IMR-90 (cell line): ENCODE measurements at regions of chr2 and their contacts with region 1.

Region 1: GRCh38 chr2:12769492-12770105 is 52.9 kb downstream of the TRIB2 start:
- DNase-seq: peak; percentile 24
- ATAC-seq: no peak
- H3K4me3 ChIP-seq: no peak overlapping the region
- H3K27ac ChIP-seq: no peak overlapping the region
- H3K4me1 ChIP-seq: peaks cover 12% of the 10 kb centered on the region
- H3K27me3 ChIP-seq: no peaks in the 10 kb centered on the region
- CTCF ChIP-seq: no peak
- POLR2A ChIP-seq: no peak
- RAD21 ChIP-seq: no peak

Region 2: GRCh38 chr2:12469141-12469561 is 300.4 kb before region 1 on chr2:
- CTCF ChIA-PET with region 1: no interaction called
- POLR2A ChIA-PET with region 1: no interaction called
- dilution Hi-C with region 1: no loop called
- in situ Hi-C with region 1: no loop called
- intact Hi-C with region 1: no loop called
- DNase-seq: peak; percentile 52
- ATAC-seq: peak; percentile 93
- H3K4me3 ChIP-seq: no peak overlapping the region
- H3K27ac ChIP-seq: peak overlapping the region; percentile 1; the same call in 1 of the 2 replicates
- H3K4me1 ChIP-seq: peaks cover 9% of the 10 kb centered on the region
- H3K27me3 ChIP-seq: no peaks in the 10 kb centered on the region
- CTCF ChIP-seq: no peak
- POLR2A ChIP-seq: no peak
- RAD21 ChIP-seq: no peak

Region 3: DNA sequence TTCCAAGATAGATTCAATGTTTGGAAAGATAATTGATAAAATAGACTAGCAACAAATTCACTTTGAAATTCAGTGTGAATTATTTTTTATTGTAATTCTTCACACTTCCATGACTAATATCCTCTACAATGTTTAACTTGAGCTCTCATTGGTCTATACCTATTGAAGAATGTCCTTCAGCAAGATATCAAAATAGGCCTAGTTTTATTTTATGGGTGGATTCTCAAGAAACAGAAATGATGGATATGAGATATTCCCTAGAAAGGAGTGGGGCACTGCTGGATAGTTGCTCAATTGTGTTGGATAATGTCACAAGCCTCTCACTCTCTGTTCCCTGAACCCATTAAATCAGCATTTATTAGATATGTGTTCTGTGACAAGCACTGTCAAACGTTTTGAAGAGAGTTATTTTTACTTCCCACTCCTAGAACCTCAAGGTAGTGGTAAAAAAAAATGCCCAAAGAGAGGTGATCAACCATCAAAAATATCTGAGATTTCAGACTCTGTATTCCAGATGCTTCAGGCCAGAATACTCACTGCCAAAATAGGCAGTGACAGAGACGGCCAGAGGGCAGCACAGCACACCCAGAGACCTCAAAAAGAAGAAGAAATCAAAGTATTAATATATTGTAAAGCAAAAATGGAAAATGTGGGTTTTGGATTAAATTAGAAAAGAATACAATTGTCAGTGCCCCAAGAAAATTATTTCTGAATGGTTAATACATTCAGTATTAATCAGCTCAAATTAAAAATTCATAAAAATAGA is 34.7 kb after region 1 on chr2:
- CTCF ChIA-PET with region 1: no interaction called
- POLR2A ChIA-PET with region 1: no interaction called
- dilution Hi-C with region 1: no loop called
- in situ Hi-C with region 1: no loop called
- intact Hi-C with region 1: loop called (anchors 5 kb)
- DNase-seq: no peak
- ATAC-seq: no peak; the same call in 1 of the 2 replicates
- H3K4me3 ChIP-seq: no peak overlapping the region
- H3K27ac ChIP-seq: no peak overlapping the region
- H3K4me1 ChIP-seq: no peaks in the 10 kb centered on the region
- H3K27me3 ChIP-seq: no peaks in the 10 kb centered on the region
- CTCF ChIP-seq: no peak
- POLR2A ChIP-seq: no peak
- RAD21 ChIP-seq: no peak

Region 4: DNA sequence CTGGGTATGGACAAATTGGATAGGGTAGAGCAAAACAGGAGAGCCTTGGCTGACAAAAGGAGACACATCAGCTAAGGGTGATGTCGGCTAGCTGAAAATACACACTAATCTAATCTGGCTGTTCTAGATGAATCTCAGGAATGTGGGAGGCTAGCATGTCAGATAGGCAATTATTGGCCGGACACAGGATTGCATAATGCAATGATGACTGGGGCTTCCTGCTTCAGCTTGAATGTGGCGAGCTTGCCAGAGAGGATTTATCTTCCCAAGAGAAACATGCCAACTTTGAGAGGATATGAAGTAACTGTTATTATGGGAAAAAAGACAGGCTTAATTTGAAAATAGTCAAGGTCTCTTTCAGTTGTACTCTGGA is 49.5 kb after region 1 on chr2:
- CTCF ChIA-PET with region 1: no interaction called
- POLR2A ChIA-PET with region 1: no interaction called
- dilution Hi-C with region 1: no loop called
- in situ Hi-C with region 1: no loop called
- intact Hi-C with region 1: loop called (anchors 2 kb)
- DNase-seq: peak; percentile 99
- ATAC-seq: peak; percentile 89
- H3K4me3 ChIP-seq: no peak overlapping the region
- H3K27ac ChIP-seq: peak overlapping the region; percentile 65
- H3K4me1 ChIP-seq: peaks cover 13% of the 10 kb centered on the region
- H3K27me3 ChIP-seq: no peaks in the 10 kb centered on the region
- CTCF ChIP-seq: no peak
- POLR2A ChIP-seq: no peak
- RAD21 ChIP-seq: no peak; the same call in 1 of the 2 replicates

Region 5: GRCh38 chr2:12856934-12857601 is 87.5 kb after region 1 on chr2:
- CTCF ChIA-PET with region 1: no interaction called
- POLR2A ChIA-PET with region 1: no interaction called
- dilution Hi-C with region 1: no loop called
- in situ Hi-C with region 1: no loop called
- intact Hi-C with region 1: no loop called
- DNase-seq: peak; percentile 75
- ATAC-seq: peak; percentile 71
- H3K4me3 ChIP-seq: no peak overlapping the region
- H3K27ac ChIP-seq: peak overlapping the region; percentile 92
- H3K4me1 ChIP-seq: peaks cover 16% of the 10 kb centered on the region
- H3K27me3 ChIP-seq: no peaks in the 10 kb centered on the region
- CTCF ChIP-seq: no peak
- POLR2A ChIP-seq: no peak
- RAD21 ChIP-seq: no peak